B cell (primary cell): ENCODE measurements at regions of chr16 and their contacts with region 1.

Region 1: GRCh38 chr16:11396241-11397048 is 51.2 kb downstream of the RMI2 start:
- DNase-seq: peak; percentile 76
- ATAC-seq: peak; percentile 79
- H3K4me3 ChIP-seq: no peak overlapping the region
- H3K4me3 Mint-ChIP-seq: no peak overlapping the region
- H3K27ac ChIP-seq: no peak overlapping the region
- H3K27ac Mint-ChIP-seq: no peak overlapping the region
- H3K4me1 ChIP-seq: peaks cover 0 to 6% of the 10 kb centered on the region in 2 donors
- H3K4me1 Mint-ChIP-seq: peaks cover 8% of the 10 kb centered on the region
- H3K27me3 ChIP-seq: peaks cover 0 to 3% (median 1%) of the 10 kb centered on the region in 4 experiments
- H3K27me3 Mint-ChIP-seq: no peaks in the 10 kb centered on the region
- CTCF ChIP-seq: peak; percentile 99

Region 2: DNA sequence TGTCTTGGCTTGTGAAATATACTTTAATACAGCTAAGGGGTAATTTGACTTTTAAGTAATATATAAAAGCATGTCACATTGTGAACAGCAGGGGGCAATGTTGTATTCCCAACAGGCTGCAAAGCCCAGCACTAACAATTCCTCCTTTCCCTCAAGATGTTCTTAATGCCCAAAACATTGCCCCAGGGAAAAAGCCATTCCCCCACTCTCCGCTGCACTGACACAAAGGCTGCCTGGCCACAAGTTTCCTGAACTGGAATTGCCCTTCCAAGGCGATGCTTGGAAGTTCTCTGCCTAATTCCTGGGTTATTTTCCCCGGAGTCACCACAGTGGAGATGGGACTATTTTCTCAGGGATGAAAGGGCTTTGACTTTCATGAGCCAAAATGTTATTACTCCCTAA is 424.9 kb before region 1 on chr16:
- CTCF ChIA-PET with region 1: interaction called, 27 read pairs
- POLR2A ChIA-PET with region 1: no interaction called
- intact Hi-C with region 1: no loop called
- DNase-seq: peak; percentile 64
- ATAC-seq: peak; percentile 39
- H3K4me3 ChIP-seq: no peak overlapping the region
- H3K4me3 Mint-ChIP-seq: no peak overlapping the region
- H3K27ac ChIP-seq: no peak overlapping the region
- H3K27ac Mint-ChIP-seq: no peak overlapping the region
- H3K4me1 ChIP-seq: no peaks in the 10 kb centered on the region
- H3K4me1 Mint-ChIP-seq: peaks cover 6% of the 10 kb centered on the region
- H3K27me3 ChIP-seq: no peaks in the 10 kb centered on the region
- H3K27me3 Mint-ChIP-seq: no peaks in the 10 kb centered on the region
- CTCF ChIP-seq: peak; percentile 89

Region 3: DNA sequence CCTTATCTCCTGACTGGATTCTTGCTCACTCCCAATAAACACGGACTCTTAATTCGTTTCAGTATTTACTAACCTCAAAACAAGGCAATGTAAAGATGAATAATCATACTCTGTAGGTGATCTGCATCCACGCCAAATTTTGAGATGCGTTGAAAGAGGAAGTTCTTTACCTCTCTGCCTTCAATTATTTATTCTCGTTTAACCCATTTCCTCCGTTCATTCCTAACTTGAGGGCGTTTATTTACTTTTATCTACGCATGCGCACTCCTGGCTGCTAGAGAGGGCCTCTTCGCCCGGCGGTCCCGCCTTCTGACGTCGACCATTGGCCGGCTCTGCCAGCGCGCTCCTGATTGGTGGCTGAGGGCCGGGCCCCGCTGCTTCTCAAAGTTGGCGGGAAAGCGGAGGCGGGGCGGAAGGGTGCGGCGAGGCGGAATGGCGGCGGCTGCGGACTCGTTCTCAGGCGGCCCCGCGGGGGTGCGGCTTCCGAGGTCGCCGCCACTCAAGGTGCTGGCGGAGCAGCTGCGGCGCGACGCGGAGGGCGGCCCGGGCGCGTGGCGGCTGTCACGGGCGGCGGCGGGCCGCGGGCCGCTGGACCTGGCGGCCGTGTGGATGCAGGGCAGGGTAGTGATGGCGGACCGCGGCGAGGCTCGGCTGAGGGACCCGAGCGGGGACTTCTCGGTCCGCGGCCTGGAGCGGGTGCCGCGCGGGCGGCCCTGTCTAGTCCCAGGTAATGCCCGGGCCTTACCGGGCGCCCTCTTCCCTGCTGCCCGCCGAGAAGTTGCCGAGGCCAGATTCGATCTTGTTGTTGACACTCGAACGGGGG is 51.2 kb before region 1 on chr16 and contains the start of gene RMI2:
- CTCF ChIA-PET with region 1: interaction called, 14 read pairs
- POLR2A ChIA-PET with region 1: no interaction called
- intact Hi-C with region 1: no loop called
- DNase-seq: peak; percentile 97
- ATAC-seq: peak; percentile 100
- H3K4me3 ChIP-seq: peak within 1 kb of the TSS; percentile 61 to 76 (median 70)
- H3K4me3 Mint-ChIP-seq: peak within 1 kb of the TSS; percentile 90
- H3K27ac ChIP-seq: peak within 1 kb of the TSS in 1 of 2 donors; percentile 26
- H3K27ac Mint-ChIP-seq: peak within 1 kb of the TSS; percentile 78
- H3K4me1 ChIP-seq: peaks cover 8 to 25% of the 10 kb centered on the region in 2 donors
- H3K4me1 Mint-ChIP-seq: peaks cover 39% of the 10 kb centered on the region
- H3K27me3 ChIP-seq: no peaks in the 10 kb centered on the region
- H3K27me3 Mint-ChIP-seq: no peaks in the 10 kb centered on the region
- CTCF ChIP-seq: no peak
- total RNA-seq, gene RMI2: 25.5 and 27.0 TPM in 2 replicates

Region 4: DNA sequence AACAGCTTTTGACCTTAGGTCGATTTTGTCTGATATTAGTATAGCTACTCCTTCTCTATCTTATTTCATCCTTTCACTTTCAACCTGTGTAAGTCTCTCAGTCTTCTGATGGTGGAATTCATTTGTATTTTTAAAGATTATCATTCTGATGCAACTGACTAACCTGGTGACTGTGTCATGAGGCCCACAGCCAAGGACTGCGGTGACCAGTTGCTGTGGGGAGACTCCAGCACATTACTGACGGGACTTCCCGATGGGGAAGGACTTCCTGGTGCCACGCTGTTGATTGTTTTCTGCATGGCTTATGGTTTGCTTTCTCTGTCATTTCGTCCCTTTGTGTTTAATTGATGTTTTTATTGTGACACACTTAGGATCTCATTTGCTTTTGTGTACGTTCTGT is 17.0 kb before region 1 on chr16:
- CTCF ChIA-PET with region 1: interaction called, 20 read pairs
- POLR2A ChIA-PET with region 1: no interaction called
- intact Hi-C with region 1: no loop called
- DNase-seq: peak; percentile 59
- ATAC-seq: peak; percentile 66
- H3K4me3 ChIP-seq: no peak overlapping the region
- H3K4me3 Mint-ChIP-seq: peak overlapping the region; percentile 78
- H3K27ac ChIP-seq: no peak overlapping the region
- H3K27ac Mint-ChIP-seq: peak overlapping the region; percentile 73
- H3K4me1 ChIP-seq: no peaks in the 10 kb centered on the region
- H3K4me1 Mint-ChIP-seq: peaks cover 11% of the 10 kb centered on the region
- H3K27me3 ChIP-seq: peaks cover 0 to 9% (median 0%) of the 10 kb centered on the region in 4 experiments
- H3K27me3 Mint-ChIP-seq: peaks cover 4% of the 10 kb centered on the region
- CTCF ChIP-seq: no peak